ENCODE measurements at regions of chr12 and their contacts with region 1.

Region 1: DNA sequence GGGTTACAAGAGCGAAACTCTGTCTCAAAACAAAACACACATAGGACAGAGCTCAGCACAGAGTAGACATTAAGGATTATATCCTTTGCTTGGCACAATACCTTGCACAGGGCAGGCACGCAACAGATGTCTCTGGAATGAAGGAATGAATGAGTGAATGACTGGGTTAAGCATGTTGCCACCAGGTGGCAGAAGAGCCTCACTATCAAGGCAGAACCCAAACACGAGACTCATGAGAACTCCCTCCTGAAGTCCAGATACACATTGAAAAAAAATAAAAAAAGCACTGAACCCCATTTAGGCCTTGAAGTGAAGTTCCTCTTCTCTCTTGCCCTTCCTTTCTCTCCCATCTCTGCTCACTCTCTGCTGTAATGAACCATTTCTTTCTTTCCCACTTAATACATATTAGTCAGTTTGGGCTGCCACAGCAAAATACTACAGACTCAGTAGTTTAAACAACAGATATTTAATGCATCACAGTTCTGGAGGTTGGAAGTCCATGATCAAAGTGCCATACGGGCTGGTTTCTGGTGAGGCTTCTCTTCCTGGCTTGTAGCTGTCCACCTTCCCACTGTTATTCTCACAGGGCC is 26.6 kb upstream of the LTA4H start:
- DNase-seq: peak; percentile 87
- ATAC-seq: peak; percentile 91
- H3K4me3 Mint-ChIP-seq: no peak overlapping the region
- H3K27ac Mint-ChIP-seq: peak overlapping the region; percentile 47
- H3K4me1 Mint-ChIP-seq: peaks cover 23% of the 10 kb centered on the region
- H3K27me3 Mint-ChIP-seq: no peaks in the 10 kb centered on the region

Region 2: DNA sequence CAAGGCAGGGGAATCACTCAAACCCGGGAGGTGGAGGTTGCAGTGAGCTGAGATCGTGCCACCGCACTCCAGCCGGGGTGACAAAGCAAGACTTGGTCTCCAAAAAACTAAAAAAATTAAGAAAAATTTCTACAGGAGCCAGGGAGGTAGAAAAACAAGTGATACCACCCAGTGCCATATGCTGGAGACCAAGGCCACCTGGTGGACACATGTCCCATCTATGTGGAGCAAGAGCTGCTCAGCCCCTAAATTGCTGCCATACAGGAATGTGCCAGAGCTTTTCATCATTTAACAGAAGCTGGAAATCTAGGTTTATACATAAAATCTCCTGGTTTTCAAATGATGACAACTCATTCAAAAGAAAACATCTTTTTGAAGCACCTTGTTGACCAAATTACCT is 70.9 kb after region 1 on chr12:
- CTCF ChIA-PET with region 1: interaction called, 3 read pairs
- POLR2A ChIA-PET with region 1: no interaction called
- intact Hi-C with region 1: loop called (anchors 2 kb)
- DNase-seq: peak; percentile 39
- ATAC-seq: no peak
- H3K4me3 Mint-ChIP-seq: no peak overlapping the region
- H3K27ac Mint-ChIP-seq: no peak overlapping the region
- H3K4me1 Mint-ChIP-seq: peaks cover 23% of the 10 kb centered on the region
- H3K27me3 Mint-ChIP-seq: peaks cover 6% of the 10 kb centered on the region

Region 3: GRCh38 chr12:96383371-96383770 is 321.4 kb after region 1 on chr12:
- CTCF ChIA-PET with region 1: no interaction called
- POLR2A ChIA-PET with region 1: no interaction called
- intact Hi-C with region 1: no loop called
- DNase-seq: no peak
- ATAC-seq: no peak
- H3K4me3 Mint-ChIP-seq: no peak overlapping the region
- H3K27ac Mint-ChIP-seq: peak overlapping the region; percentile 17
- H3K4me1 Mint-ChIP-seq: peaks cover 77% of the 10 kb centered on the region
- H3K27me3 Mint-ChIP-seq: no peaks in the 10 kb centered on the region